CD8-positive, alpha-beta T cell (primary cell): ENCODE measurements at regions of chr1 and their contacts with region 1.

Region 1: GRCh38 chr1:2174348-2175054 is 20.1 kb downstream of the FAAP20 start:
- DNase-seq: peak in 4 of 9 experiments; percentile 25 to 62 (median 45)
- ATAC-seq: peak; percentile 56
- H3K4me3 ChIP-seq: no peak overlapping the region
- H3K4me3 Mint-ChIP-seq: no peak overlapping the region
- H3K27ac ChIP-seq: no peak overlapping the region
- H3K27ac Mint-ChIP-seq: no peak overlapping the region
- H3K4me1 ChIP-seq: no peaks in the 10 kb centered on the region
- H3K4me1 Mint-ChIP-seq: no peaks in the 10 kb centered on the region
- H3K27me3 ChIP-seq: no peaks in the 10 kb centered on the region
- H3K27me3 Mint-ChIP-seq: no peaks in the 10 kb centered on the region
- CTCF ChIP-seq: peak; percentile 63

Region 2: GRCh38 chr1:2091611-2092604 is 82.6 kb before region 1 on chr1:
- CTCF ChIA-PET with region 1: interaction called, 6 read pairs
- POLR2A ChIA-PET with region 1: no interaction called
- intact Hi-C with region 1: loop called in 1 of 2 experiments (anchors 1 kb)
- DNase-seq: peak in 8 of 9 experiments; percentile 9 to 66 (median 48)
- ATAC-seq: peak; percentile 40
- H3K4me3 ChIP-seq: no peak overlapping the region
- H3K4me3 Mint-ChIP-seq: no peak overlapping the region
- H3K27ac ChIP-seq: no peak overlapping the region
- H3K27ac Mint-ChIP-seq: no peak overlapping the region
- H3K4me1 ChIP-seq: no peaks in the 10 kb centered on the region
- H3K4me1 Mint-ChIP-seq: peaks cover 4% of the 10 kb centered on the region
- H3K27me3 ChIP-seq: no peaks in the 10 kb centered on the region
- H3K27me3 Mint-ChIP-seq: no peaks in the 10 kb centered on the region
- CTCF ChIP-seq: peak; percentile 66

Region 3: DNA sequence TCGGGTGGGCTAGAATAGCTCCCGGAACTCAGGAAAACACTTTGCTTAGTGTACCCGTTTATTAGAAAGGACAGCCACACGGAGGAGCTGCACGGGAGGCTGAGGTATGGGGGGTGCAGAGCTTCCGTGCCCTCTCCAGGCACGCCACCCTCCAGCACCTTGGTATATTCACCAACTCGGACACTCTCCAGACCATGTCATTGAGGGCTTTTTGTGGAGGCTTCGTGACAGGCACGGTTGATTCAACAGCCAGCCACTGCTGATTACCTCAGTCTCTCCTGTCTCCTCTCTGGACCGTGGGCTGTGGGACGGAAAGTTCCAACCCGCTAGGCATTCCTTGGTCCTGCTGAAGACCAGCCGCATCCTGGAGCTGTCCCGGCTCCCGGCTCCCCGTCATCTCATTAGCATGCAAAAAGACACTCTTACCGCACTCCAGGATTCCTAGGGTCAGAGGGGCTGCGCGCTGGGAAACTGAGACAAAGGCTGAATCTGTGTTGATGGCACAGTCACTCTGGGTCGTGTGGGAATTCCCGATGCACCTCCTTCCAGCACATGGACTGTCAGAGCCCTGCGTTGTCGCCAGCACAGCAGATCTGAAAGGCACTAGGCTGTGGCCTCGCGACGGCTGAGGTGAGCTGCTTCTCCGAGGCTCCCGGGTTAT is 58.7 kb before region 1 on chr1:
- CTCF ChIA-PET with region 1: interaction called, 13 read pairs
- POLR2A ChIA-PET with region 1: no interaction called
- intact Hi-C with region 1: no loop called
- DNase-seq: no peak
- ATAC-seq: no peak
- H3K4me3 ChIP-seq: no peak overlapping the region
- H3K4me3 Mint-ChIP-seq: no peak overlapping the region
- H3K27ac ChIP-seq: no peak overlapping the region
- H3K27ac Mint-ChIP-seq: no peak overlapping the region
- H3K4me1 ChIP-seq: no peaks in the 10 kb centered on the region
- H3K4me1 Mint-ChIP-seq: peaks cover 6% of the 10 kb centered on the region
- H3K27me3 ChIP-seq: no peaks in the 10 kb centered on the region
- H3K27me3 Mint-ChIP-seq: no peaks in the 10 kb centered on the region
- CTCF ChIP-seq: no peak

Region 4: DNA sequence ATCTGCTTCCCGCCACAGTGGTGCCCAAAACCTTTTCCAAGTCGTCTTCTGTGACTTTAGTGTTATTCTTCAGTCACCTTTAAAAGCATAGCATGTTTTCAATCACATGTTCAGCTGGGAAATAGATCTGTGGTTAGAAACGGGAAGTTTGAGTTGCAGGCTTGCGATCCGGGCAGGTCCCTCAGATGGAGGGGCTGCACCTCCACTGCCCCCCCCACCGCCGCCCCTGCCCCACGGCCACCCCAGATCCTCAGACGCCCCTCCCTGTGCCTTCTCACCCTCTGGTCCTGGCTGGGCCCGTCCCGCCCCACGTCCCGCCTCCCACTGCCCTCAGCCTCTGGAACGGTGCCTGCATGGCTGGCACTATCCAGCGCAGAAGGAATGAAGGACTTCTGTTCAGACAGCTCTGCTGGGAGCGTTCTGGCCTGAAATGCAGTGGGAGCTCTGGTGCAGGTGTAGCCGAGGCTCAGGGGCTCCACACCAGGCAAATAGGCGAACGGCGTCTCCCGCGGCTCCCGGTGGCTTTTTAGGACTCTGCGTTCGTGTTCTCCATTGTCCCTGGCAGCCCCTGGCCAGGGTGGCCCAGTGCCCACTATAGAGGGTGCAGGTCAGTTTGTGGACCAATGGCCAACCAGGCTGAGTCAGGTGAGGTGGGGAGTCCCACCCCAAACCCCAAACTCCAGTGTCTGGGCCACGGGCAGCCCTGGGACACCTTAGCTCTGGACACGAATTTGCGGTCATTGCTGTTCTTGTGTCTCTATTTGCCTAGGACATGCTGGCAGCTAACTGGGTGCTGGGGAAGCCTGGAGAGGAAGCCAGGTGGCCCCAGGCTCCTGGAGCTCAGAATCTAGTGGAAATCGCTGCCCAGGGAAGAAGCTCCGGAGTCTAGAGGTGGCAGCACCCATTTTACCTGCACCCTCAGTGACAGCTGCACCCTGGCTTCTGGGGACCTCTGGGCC is 47.0 kb before region 1 on chr1:
- CTCF ChIA-PET with region 1: interaction called, 11 read pairs
- POLR2A ChIA-PET with region 1: no interaction called
- intact Hi-C with region 1: loop called in 1 of 2 experiments (anchors 1 kb)
- DNase-seq: no peak
- ATAC-seq: peak; percentile 26
- H3K4me3 ChIP-seq: no peak overlapping the region
- H3K4me3 Mint-ChIP-seq: peak overlapping the region; percentile 79
- H3K27ac ChIP-seq: no peak overlapping the region
- H3K27ac Mint-ChIP-seq: peak overlapping the region; percentile 88
- H3K4me1 ChIP-seq: peaks cover 26% of the 10 kb centered on the region
- H3K4me1 Mint-ChIP-seq: peaks cover 21% of the 10 kb centered on the region
- H3K27me3 ChIP-seq: no peaks in the 10 kb centered on the region
- H3K27me3 Mint-ChIP-seq: no peaks in the 10 kb centered on the region
- CTCF ChIP-seq: no peak

Region 5: DNA sequence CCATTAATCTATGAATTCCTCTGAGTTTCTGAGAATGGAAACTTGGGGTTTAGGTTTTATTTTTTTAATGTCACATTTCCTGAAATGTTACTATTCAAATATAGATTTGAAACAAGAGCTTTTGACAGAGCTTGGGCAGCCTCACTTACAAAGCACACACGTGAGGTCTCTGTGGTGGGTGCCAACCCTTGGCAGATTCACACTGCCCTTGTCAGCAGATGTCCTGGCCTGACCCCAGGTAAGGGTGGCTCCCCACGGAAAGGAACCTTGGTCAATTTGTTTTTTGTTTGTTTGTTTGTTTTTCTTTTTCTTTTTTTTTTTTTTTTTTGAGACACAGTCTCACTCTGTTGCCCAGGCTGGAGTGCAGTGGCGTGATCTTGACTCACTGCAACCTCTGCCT is 33.5 kb before region 1 on chr1:
- CTCF ChIA-PET with region 1: interaction called, 19 read pairs
- POLR2A ChIA-PET with region 1: no interaction called
- intact Hi-C with region 1: no loop called
- DNase-seq: no peak
- ATAC-seq: no peak
- H3K4me3 ChIP-seq: no peak overlapping the region
- H3K4me3 Mint-ChIP-seq: no peak overlapping the region
- H3K27ac ChIP-seq: no peak overlapping the region
- H3K27ac Mint-ChIP-seq: no peak overlapping the region
- H3K4me1 ChIP-seq: peaks cover 24% of the 10 kb centered on the region
- H3K4me1 Mint-ChIP-seq: peaks cover 38% of the 10 kb centered on the region
- H3K27me3 ChIP-seq: no peaks in the 10 kb centered on the region
- H3K27me3 Mint-ChIP-seq: no peaks in the 10 kb centered on the region
- CTCF ChIP-seq: no peak

Region 6: GRCh38 chr1:2148691-2149090 is 25.8 kb before region 1 on chr1:
- CTCF ChIA-PET with region 1: interaction called, 17 read pairs
- POLR2A ChIA-PET with region 1: interaction called, 3 read pairs
- intact Hi-C with region 1: no loop called
- DNase-seq: peak; percentile 28 to 89 (median 68)
- ATAC-seq: peak; percentile 61
- H3K4me3 ChIP-seq: peak overlapping the region; percentile 2 to 18
- H3K4me3 Mint-ChIP-seq: no peak overlapping the region
- H3K27ac ChIP-seq: peak overlapping the region; percentile 56 to 64
- H3K27ac Mint-ChIP-seq: no peak overlapping the region
- H3K4me1 ChIP-seq: peaks cover 80% of the 10 kb centered on the region
- H3K4me1 Mint-ChIP-seq: peaks cover 37% of the 10 kb centered on the region
- H3K27me3 ChIP-seq: no peaks in the 10 kb centered on the region
- H3K27me3 Mint-ChIP-seq: no peaks in the 10 kb centered on the region
- CTCF ChIP-seq: no peak

Region 7: GRCh38 chr1:2163205-2163604 is 11.3 kb before region 1 on chr1:
- CTCF ChIA-PET with region 1: interaction called, 26 read pairs
- POLR2A ChIA-PET with region 1: no interaction called
- intact Hi-C with region 1: no loop called
- DNase-seq: peak in 3 of 9 experiments; percentile 41 to 51 (median 50)
- ATAC-seq: peak; percentile 59
- H3K4me3 ChIP-seq: no peak overlapping the region
- H3K4me3 Mint-ChIP-seq: no peak overlapping the region
- H3K27ac ChIP-seq: no peak overlapping the region
- H3K27ac Mint-ChIP-seq: peak overlapping the region; percentile 90
- H3K4me1 ChIP-seq: peaks cover 13% of the 10 kb centered on the region
- H3K4me1 Mint-ChIP-seq: peaks cover 17% of the 10 kb centered on the region
- H3K27me3 ChIP-seq: no peaks in the 10 kb centered on the region
- H3K27me3 Mint-ChIP-seq: no peaks in the 10 kb centered on the region
- CTCF ChIP-seq: no peak